Posterior cingulate gyrus (tissue), 11 donors: ENCODE measurements at regions of chr5 and their contacts with region 1.

Region 1: DNA sequence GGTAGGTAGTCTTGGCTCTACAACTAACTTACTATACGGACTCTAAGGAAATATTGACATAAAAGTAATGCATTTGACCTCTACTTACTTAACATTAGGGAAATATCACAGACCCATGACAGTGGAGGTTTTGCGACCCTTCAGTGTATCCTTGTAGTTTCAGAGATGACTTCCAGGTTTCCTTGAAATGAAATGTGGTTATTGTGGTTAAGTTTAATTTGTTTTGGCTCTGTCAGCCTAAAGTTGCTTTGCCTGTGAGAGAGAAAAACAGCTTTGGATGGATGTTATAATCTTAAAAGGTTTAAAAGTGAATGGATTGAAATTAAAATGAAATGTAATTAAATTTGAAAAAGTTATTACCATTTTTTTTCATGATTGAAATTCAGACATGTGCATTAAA is 42.9 kb downstream of the LRRTM2 start:
- DNase-seq: no peak

Region 2: DNA sequence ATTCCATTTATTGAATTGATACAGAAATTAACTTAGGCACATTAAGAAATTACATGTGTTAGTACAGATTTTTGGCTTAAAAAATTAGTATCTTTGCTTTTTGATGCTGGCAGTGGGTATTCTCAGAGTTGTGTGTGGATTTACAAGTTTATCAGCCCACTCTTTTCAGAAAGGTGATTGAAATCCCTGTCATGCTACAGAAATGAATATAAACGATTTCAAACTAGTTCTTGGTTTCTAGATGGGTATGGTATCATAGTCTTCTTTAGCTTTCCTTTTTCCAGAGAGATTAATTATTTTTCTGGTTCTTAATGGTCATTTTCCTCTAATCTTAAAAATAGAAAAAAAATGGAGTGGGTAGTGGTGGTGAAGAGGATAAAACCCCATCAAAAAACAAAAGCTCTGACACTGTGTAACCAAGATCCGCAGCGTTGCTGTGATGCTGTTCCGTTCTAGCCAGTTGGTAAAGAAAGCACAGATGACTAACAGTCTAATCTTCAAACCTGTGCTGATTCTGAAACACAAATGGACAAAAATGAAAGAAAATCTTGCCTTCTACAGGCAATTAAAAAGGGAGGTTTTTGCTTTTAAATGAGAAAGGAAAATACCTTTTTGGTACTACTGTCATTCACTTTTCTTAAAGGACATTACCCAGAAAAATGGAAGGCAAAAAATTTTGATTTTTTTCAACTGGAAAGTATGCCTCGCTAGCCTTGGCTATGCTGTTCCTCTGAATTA is 37.7 kb after region 1 on chr5:
- intact Hi-C with region 1: loop called (anchors 5 kb)
- DNase-seq: peak in 1 of 10 donors; percentile 39

Region 3: GRCh38 chr5:139417214-139417613 is 585.0 kb after region 1 on chr5:
- intact Hi-C with region 1: no loop called
- DNase-seq: peak in 2 of 10 donors; percentile 42 to 82